MCF 10A (cell line): ENCODE measurements at regions of chr10 and their contacts with region 1.

Region 1: GRCh38 chr10:27446091-27446918 is 57.8 kb upstream of the RAB18 start:
- DNase-seq: peak; percentile 45
- H3K4me3 Mint-ChIP-seq: no peak overlapping the region
- H3K27ac Mint-ChIP-seq: peak overlapping the region; percentile 73
- H3K4me1 Mint-ChIP-seq: peaks cover 16% of the 10 kb centered on the region
- H3K27me3 Mint-ChIP-seq: no peaks in the 10 kb centered on the region
- CTCF ChIP-seq: peak; percentile 38

Region 2: GRCh38 chr10:27369880-27370279 is 76.4 kb before region 1 on chr10:
- CTCF ChIA-PET with region 1: interaction called, 6 read pairs
- POLR2A ChIA-PET with region 1: interaction called, 3 read pairs
- intact Hi-C with region 1: loop called (anchors 1 kb)
- DNase-seq: peak; percentile 24
- H3K4me3 Mint-ChIP-seq: no peak overlapping the region
- H3K27ac Mint-ChIP-seq: no peak overlapping the region
- H3K4me1 Mint-ChIP-seq: peaks cover 22% of the 10 kb centered on the region
- H3K27me3 Mint-ChIP-seq: no peaks in the 10 kb centered on the region
- CTCF ChIP-seq: peak; percentile 40

Region 3: DNA sequence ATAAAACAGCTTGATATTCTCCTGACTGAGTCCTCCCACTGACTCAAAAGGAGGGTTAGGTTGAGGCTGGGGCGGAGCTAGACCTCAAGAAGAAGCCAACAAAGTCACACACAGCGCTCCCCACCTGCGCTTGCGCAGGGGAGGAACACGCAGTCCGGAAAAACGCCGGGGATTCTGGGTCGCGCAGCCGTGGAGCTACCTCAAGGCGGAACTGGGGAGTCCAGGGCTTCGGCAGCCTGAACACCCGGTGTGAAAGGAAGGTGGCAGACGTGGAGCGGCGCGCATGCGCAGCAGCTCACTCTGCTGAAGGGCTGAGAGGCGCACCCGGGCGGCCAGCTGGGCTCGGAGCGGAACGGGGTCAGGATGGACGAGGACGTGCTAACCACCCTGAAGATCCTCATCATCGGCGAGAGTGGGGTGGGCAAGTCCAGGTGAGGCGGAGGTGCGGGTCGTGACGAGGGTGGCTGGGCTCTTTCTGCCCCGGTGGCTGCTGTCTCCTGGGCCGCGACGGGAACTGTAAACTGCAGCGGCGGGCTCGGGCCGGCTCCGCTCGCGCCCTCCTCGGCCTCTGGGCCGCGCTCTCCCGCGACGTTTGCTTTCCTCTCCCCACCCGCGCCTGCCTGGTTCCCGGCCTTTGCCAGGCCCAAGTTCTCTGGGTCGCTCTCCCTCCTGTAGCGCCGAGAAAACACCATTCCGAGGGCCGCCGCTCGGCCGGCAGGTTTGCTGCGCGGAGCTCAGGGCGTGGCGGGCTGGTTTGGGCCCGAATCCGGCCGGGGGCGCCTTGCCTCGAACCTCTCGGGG is 57.9 kb after region 1 on chr10 and contains the start of gene RAB18:
- CTCF ChIA-PET with region 1: interaction called, 5 read pairs
- POLR2A ChIA-PET with region 1: interaction called, 12 read pairs
- intact Hi-C with region 1: loop called (anchors 5 kb)
- DNase-seq: peak; percentile 98
- H3K4me3 Mint-ChIP-seq: peak within 1 kb of the TSS; percentile 99
- H3K27ac Mint-ChIP-seq: peak within 1 kb of the TSS; percentile 99
- H3K4me1 Mint-ChIP-seq: peaks cover 33% of the 10 kb centered on the region
- H3K27me3 Mint-ChIP-seq: no peaks in the 10 kb centered on the region
- CTCF ChIP-seq: no peak
- total RNA-seq, gene RAB18: 126 and 129 TPM in 2 replicates

Region 4: GRCh38 chr10:27558612-27559020 is 112.3 kb after region 1 on chr10:
- CTCF ChIA-PET with region 1: interaction called, 4 read pairs
- POLR2A ChIA-PET with region 1: no interaction called
- intact Hi-C with region 1: loop called (anchors 1 kb)
- DNase-seq: peak; percentile 81
- H3K4me3 Mint-ChIP-seq: no peak overlapping the region
- H3K27ac Mint-ChIP-seq: no peak overlapping the region
- H3K4me1 Mint-ChIP-seq: no peaks in the 10 kb centered on the region
- H3K27me3 Mint-ChIP-seq: no peaks in the 10 kb centered on the region
- CTCF ChIP-seq: peak; percentile 91

Region 5: DNA sequence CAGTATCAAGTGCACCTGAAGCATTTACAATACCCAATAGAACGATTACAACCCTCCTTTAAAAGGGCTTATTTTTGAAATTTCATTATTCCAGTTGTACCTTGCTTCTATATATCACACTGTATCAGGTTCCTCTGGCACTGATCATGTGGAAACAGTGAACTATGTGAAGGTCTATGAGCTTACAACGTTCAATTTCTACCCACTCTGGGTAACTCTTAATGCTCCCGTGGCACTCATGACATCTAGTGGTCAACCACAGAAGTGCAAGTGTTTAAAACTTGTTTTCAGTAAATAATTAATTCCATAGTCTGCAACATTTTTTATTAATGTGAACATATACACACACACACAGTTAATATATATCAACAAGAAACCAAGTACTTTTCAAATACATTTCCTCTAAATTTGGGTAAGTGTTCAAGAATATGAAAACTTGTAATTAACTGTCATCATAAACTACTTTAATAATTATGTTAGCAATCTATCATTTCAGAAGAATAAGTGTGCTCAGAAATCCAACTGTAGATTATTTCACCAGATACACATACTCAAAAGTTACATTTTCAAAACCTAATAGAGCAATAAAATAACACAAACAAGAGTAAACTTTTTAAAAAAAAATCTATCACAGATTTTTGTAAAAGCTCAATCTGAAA is 795.6 kb after region 1 on chr10:
- CTCF ChIA-PET with region 1: no interaction called
- POLR2A ChIA-PET with region 1: no interaction called
- intact Hi-C with region 1: loop called (anchors 1 kb)
- DNase-seq: peak; percentile 64
- H3K4me3 Mint-ChIP-seq: no peak overlapping the region
- H3K27ac Mint-ChIP-seq: no peak overlapping the region
- H3K4me1 Mint-ChIP-seq: peaks cover 5% of the 10 kb centered on the region
- H3K27me3 Mint-ChIP-seq: no peaks in the 10 kb centered on the region
- CTCF ChIP-seq: peak; percentile 75